ENCODE measurements at regions of chr12 and their contacts with region 1.

Region 1: GRCh38 chr12:6278439-6279255 is 31.8 kb upstream of the PLEKHG6 start:
- DNase-seq: peak; percentile 82 to 88
- ATAC-seq: peak; percentile 76 to 96 (median 89)
- H3K4me3 ChIP-seq: peak overlapping the region; percentile 9 to 68 (median 60)
- H3K27ac ChIP-seq: peak overlapping the region; percentile 66 to 93 (median 88)
- H3K4me1 ChIP-seq: peaks cover 14 to 48% (median 37%) of the 10 kb centered on the region in 9 donors
- H3K27me3 ChIP-seq: peaks cover 0 to 17% (median 0%) of the 10 kb centered on the region in 7 donors
- CTCF ChIP-seq: peak; percentile 68 to 100 (median 94)

Region 2: GRCh38 chr12:5988659-5989116 is 290.0 kb before region 1 on chr12:
- intact Hi-C with region 1: loop called in 6 of 10 experiments (anchors 5 to 10 kb)
- DNase-seq: peak; percentile 65 to 77
- ATAC-seq: peak; percentile 80 to 93 (median 90)
- H3K4me3 ChIP-seq: no peak overlapping the region
- H3K27ac ChIP-seq: no peak overlapping the region
- H3K4me1 ChIP-seq: peaks cover 0 to 9% (median 0%) of the 10 kb centered on the region in 9 donors
- H3K27me3 ChIP-seq: peaks cover 0 to 3% (median 0%) of the 10 kb centered on the region in 7 donors
- CTCF ChIP-seq: peak; percentile 87 to 97 (median 94)

Region 3: GRCh38 chr12:6062757-6063735 is 215.6 kb before region 1 on chr12:
- intact Hi-C with region 1: loop called in 6 of 10 experiments (anchors 2 to 5 kb)
- DNase-seq: peak in 1 of 2 donors; percentile 51
- ATAC-seq: peak in 7 of 8 donors; percentile 36 to 68 (median 58)
- H3K4me3 ChIP-seq: no peak overlapping the region
- H3K27ac ChIP-seq: peak overlapping the region in 1 of 10 donors; percentile 19
- H3K4me1 ChIP-seq: peaks cover 0 to 33% (median 2%) of the 10 kb centered on the region in 9 donors
- H3K27me3 ChIP-seq: no peaks in the 10 kb centered on the region
- CTCF ChIP-seq: peak; percentile 79 to 95 (median 84)

Region 4: DNA sequence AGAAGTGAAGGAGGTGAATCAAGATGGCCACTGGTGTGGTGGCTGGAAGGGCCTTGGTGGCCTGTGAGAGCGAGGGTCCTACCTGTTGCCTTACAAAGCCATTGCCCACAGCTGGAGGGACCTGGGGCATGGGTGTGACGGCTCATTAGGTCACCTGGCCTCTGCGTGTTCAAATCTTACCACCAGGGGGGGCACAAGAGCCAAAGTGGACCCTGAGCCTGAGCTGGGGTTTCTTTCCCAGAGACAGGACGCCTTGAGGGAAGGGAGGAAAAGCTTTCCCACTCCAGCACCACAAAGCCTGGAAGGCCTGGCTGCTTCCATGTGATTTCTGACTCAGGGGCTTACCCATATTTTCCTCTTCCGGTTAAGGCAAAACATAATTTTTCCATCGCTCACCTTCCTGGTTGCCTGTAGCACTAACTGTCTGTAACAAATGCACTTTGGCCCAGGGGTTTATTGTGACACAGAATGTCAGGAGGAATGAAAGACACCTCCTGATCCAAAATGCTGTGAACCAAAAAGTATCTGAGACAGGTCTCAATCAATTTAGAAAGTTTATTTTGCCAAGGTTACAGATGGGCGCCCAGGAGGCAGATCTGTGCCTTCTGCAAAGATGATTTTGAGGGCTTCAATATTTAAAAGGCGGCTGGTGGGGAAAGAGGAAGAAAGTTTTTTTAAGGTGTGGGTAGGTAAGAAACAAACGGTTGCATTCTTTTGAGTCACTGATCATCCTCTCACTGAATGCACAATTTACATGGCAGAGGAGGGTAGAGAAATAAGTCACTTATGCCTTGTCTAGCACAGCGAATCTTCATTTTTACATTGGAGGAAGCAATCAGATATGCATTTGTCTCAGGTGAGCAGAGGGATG is 82.7 kb before region 1 on chr12:
- intact Hi-C with region 1: loop called (anchors 1 to 2 kb)
- DNase-seq: peak; percentile 83 to 93
- ATAC-seq: peak; percentile 72 to 87 (median 82)
- H3K4me3 ChIP-seq: no peak overlapping the region
- H3K27ac ChIP-seq: peak overlapping the region in 9 of 10 donors; percentile 27 to 83 (median 74)
- H3K4me1 ChIP-seq: peaks cover 0 to 39% (median 18%) of the 10 kb centered on the region in 9 donors
- H3K27me3 ChIP-seq: peaks cover 0 to 30% (median 0%) of the 10 kb centered on the region in 7 donors
- CTCF ChIP-seq: peak; percentile 88 to 98 (median 94)

Region 5: DNA sequence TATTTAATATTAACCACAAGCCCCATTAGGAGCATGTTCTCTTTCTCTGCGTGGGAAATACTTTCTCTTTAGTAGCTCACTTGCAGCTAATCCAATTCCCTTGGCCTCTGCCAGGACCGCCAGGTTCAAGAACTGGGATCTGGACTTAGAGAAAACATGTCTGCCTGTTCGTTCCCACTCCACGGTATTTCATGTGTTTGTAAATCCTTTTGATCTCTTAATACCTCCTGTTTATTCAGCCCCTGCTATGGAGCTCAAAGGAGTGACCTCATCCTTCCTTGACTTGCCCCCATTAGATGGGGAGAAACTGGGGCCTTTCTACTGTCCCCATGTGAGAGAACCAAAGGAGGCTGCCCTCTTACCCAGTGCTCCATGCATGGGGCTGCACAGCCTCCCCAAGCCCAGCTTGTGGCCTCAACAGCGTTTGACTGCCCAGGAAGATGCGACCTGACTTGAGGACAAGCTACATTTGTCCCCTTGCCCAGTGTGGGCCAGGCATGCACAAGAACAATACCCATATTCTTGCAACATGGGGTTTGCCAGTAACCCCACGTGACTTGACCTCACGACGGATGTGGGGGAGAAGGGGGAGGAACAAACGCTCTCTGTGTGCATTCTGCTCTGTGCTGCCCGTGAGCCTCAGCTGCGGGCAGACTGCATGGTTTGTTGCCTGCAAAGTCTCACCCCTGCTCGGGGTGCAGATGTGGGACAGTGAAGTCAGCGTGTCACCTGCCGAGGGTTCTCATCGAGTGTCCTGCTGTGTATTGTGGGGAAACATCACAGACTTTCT is 48.1 kb before region 1 on chr12:
- intact Hi-C with region 1: loop called in 7 of 10 experiments (anchors 1 to 5 kb)
- DNase-seq: peak in 1 of 2 donors; percentile 61
- ATAC-seq: peak in 3 of 8 donors; percentile 3 to 11 (median 8)
- H3K4me3 ChIP-seq: peak overlapping the region in 1 of 10 donors; percentile 11
- H3K27ac ChIP-seq: peak overlapping the region; percentile 79 to 96 (median 88)
- H3K4me1 ChIP-seq: peaks cover 72 to 100% (median 95%) of the 10 kb centered on the region in 9 donors
- H3K27me3 ChIP-seq: no peaks in the 10 kb centered on the region
- CTCF ChIP-seq: no peak

Region 6: DNA sequence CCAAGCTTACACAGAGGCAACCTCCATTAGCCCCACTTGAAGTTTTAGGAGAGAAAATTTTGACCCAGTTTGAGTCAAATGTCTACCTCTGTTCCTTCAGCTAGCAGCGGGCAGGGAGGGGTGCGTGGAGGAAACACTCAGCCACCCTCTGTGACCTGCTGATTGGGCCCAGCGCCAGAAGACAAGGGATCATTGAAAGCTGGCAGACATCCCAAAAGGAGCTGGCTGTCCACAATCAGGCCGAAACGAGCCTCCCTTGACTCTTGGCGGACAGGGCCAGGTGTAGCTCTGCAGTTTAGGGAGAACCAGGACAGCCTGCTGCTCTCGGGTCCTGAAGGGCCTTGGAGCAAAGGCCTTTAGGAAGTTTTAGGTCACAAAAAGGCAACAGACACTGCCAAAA is 37.2 kb before region 1 on chr12:
- intact Hi-C with region 1: loop called in 4 of 10 experiments (anchors 5 kb)
- DNase-seq: peak; percentile 79 to 85
- ATAC-seq: peak; percentile 76 to 89 (median 82)
- H3K4me3 ChIP-seq: no peak overlapping the region
- H3K27ac ChIP-seq: peak overlapping the region in 4 of 10 donors; percentile 32 to 57 (median 44)
- H3K4me1 ChIP-seq: peaks cover 0 to 21% (median 13%) of the 10 kb centered on the region in 9 donors
- H3K27me3 ChIP-seq: no peaks in the 10 kb centered on the region
- CTCF ChIP-seq: no peak